Activated naive CD4-positive, alpha-beta T cell treated with anti-CD3 and anti-CD28 coated beads for 36 hours (primary cell): ENCODE measurements at regions of chr11 and their contacts with region 1.

Region 1: GRCh38 chr11:62497132-62497915 is 49.3 kb downstream of the AHNAK start:
- DNase-seq: peak; percentile 48
- H3K4me3 Mint-ChIP-seq: no peak overlapping the region
- H3K27ac Mint-ChIP-seq: no peak overlapping the region
- H3K4me1 Mint-ChIP-seq: no peaks in the 10 kb centered on the region
- H3K27me3 Mint-ChIP-seq: peaks cover 10% of the 10 kb centered on the region

Region 2: GRCh38 chr11:62542750-62543567 is 45.6 kb after region 1 on chr11:
- CTCF ChIA-PET with region 1: interaction called, 15 read pairs
- intact Hi-C with region 1: loop called (anchors 1 kb)
- DNase-seq: peak; percentile 78
- H3K4me3 Mint-ChIP-seq: peak overlapping the region; percentile 32
- H3K27ac Mint-ChIP-seq: no peak overlapping the region
- H3K4me1 Mint-ChIP-seq: peaks cover 70% of the 10 kb centered on the region
- H3K27me3 Mint-ChIP-seq: peaks cover 4% of the 10 kb centered on the region